B cell (primary cell): ENCODE measurements at regions of chr15 and their contacts with region 1.

Region 1: DNA sequence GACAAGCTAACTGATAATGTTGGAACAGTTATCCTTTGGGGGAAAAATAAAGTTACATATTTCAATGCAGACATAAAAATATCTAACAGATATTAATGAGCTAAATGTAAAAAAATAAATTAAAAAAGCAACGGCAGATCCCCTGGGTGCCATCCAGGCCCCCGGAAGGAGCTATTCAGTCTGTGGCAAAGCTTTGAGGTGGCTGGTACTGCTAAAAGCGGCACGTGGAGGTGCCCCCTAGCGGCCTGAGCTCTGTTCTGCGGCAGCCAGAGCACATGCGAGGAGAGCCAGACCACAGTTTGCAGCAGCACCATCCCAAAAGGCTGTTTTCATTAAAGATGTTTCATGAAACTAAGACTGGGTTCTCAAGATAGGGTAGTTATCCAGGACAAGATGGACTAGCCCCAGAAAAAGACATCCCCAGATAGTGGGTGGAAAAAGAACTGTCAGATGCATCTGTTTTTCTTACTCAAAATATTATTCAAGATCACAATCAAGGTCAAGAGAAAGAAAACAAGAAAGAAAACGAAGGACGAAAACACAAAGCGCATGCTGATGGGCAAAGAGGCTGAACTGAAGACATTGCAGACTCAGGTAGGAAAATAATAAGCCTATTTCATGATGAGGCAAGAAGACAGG is 18.7 kb downstream of the AP3S2 start:
- DNase-seq: peak; percentile 81
- ATAC-seq: peak; percentile 99
- H3K4me3 ChIP-seq: no peak overlapping the region
- H3K4me3 Mint-ChIP-seq: no peak overlapping the region
- H3K27ac ChIP-seq: no peak overlapping the region
- H3K27ac Mint-ChIP-seq: no peak overlapping the region
- H3K4me1 ChIP-seq: peaks cover 0 to 4% of the 10 kb centered on the region in 2 donors
- H3K4me1 Mint-ChIP-seq: peaks cover 5% of the 10 kb centered on the region
- H3K27me3 ChIP-seq: no peaks in the 10 kb centered on the region
- H3K27me3 Mint-ChIP-seq: no peaks in the 10 kb centered on the region
- CTCF ChIP-seq: peak; percentile 97

Region 2: DNA sequence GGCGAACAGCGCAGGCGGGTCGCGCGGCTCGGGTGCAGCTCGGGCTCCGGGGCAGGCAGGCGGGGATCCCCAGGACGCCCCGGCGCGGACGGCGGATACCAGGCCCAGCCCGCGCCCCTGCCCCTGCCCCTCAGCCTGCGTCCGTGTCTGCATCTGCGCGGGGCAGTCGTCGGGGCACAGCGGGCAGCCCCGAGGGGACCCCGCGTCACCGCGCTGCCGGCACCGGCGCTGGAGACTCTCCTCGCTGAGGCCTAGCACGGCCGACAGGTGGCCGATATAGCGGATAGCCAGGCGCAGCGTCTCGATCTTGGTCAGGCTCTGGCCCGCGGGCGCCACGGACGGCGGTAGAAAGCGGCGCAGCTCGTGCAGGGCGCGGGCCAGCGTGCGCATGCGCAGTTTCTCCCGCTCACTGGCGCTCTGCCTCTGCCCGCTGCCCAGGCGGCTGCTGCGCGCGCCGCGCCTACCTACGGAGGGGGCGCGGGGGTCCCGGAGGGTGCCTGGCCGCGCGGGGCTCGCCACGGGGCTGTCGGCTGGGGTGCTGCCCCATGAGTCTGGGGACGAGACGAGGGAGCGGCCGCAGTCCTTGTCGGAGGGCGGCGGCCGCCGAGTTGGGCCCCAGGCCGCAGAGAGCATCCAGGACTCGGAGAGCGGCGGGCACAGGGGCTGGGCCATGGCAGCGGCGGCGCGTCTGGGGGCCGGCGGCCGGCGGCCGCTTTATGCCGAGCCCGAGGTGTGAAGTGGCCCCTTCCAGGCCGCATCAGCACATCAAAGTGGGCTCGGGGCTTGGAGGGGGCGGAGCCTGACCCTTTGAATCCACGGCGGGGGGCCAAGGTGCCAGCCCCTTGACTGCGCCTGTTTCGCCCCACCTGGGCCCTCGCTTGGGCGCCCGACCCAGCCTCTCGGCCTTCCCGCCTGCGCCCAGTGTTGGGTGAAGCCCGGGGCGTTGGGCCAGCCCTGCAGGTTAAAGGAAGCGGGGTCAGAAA is 124.2 kb before region 1 on chr15 and contains the start of gene MESP1:
- CTCF ChIA-PET with region 1: interaction called, 24 read pairs
- POLR2A ChIA-PET with region 1: no interaction called
- intact Hi-C with region 1: no loop called
- DNase-seq: peak; percentile 93
- ATAC-seq: peak; percentile 96
- H3K4me3 ChIP-seq: peak within 1 kb of the TSS in 4 of 5 experiments; percentile 38 to 75 (median 63)
- H3K4me3 Mint-ChIP-seq: peak within 1 kb of the TSS; percentile 84
- H3K27ac ChIP-seq: peak within 1 kb of the TSS in 1 of 2 donors; percentile 39
- H3K27ac Mint-ChIP-seq: peak within 1 kb of the TSS; percentile 53
- H3K4me1 ChIP-seq: peaks cover 11 to 13% of the 10 kb centered on the region in 2 donors
- H3K4me1 Mint-ChIP-seq: peaks cover 6% of the 10 kb centered on the region
- H3K27me3 ChIP-seq: peaks cover 0 to 10% (median 4%) of the 10 kb centered on the region in 4 experiments
- H3K27me3 Mint-ChIP-seq: peaks cover 19% of the 10 kb centered on the region
- CTCF ChIP-seq: peak; percentile 77
- total RNA-seq, gene MESP1: 0.49 and 0.51 TPM in 2 replicates

Region 3: DNA sequence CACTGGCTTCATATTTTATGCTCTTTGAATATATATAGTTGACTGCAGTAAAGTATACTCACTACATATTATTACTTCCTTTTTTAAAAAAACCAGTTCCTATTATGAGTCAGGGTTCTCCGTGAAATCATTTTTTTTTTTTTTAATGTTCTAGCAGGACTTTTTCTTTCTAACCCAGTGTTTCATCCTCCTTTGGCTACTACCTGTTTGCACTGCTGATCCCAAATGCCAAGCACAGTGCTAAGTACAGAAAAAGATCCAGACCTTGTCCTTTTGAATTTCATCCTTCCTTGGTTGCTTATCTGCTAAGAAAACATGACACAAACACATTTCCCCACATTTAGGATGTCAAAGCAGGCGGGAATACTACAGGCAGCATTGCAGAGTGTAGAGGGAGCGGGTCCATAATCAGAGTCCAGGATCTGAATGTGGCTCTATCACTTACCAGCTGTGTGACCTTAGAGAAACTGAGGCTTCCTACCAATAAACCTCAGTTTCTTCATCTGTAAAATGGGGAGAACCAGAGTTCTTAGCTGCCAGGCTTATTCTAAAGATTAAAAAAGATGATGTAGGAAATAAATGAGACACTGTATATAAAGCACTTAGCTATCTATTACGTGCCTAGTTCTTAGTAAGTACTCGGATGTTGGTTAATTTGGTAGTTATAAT is 23.2 kb before region 1 on chr15:
- CTCF ChIA-PET with region 1: interaction called, 10 read pairs
- POLR2A ChIA-PET with region 1: no interaction called
- intact Hi-C with region 1: no loop called
- DNase-seq: peak; percentile 32
- ATAC-seq: peak; percentile 53
- H3K4me3 ChIP-seq: no peak overlapping the region
- H3K4me3 Mint-ChIP-seq: peak overlapping the region; percentile 43
- H3K27ac ChIP-seq: peak overlapping the region in 1 of 2 donors; percentile 36
- H3K27ac Mint-ChIP-seq: peak overlapping the region; percentile 22
- H3K4me1 ChIP-seq: peaks cover 14 to 29% of the 10 kb centered on the region in 2 donors
- H3K4me1 Mint-ChIP-seq: peaks cover 34% of the 10 kb centered on the region
- H3K27me3 ChIP-seq: no peaks in the 10 kb centered on the region
- H3K27me3 Mint-ChIP-seq: no peaks in the 10 kb centered on the region
- CTCF ChIP-seq: no peak

Region 4: DNA sequence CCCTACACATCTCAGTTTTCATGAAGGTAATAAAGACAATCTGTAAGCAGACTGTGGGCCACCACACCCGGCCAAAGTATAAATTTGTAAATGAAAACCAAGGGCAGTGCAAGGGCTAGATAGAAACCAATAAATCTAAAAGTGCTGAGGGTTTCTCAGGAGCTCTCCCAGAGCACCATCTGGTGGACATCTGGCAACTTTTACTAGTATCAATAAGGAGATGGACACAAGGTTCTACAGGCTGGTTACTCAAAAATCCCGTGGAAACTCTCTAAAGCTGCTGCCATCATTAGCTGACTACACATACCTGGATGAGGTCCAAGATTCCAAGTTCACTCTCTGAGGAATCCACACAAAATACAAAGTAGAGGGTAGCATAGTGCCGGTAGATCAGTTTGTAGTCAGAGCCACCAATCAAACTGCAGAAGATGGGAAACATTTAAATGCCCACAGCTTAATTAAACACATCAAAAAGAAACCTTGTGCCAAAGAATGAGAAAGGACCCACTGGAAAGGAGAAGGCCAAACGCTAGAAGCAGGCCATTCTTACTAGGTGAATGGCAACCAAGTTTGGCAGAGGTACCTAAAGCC is 13.3 kb after region 1 on chr15:
- CTCF ChIA-PET with region 1: interaction called, 54 read pairs
- POLR2A ChIA-PET with region 1: no interaction called
- intact Hi-C with region 1: no loop called
- DNase-seq: no peak
- ATAC-seq: no peak
- H3K4me3 ChIP-seq: no peak overlapping the region
- H3K4me3 Mint-ChIP-seq: no peak overlapping the region
- H3K27ac ChIP-seq: no peak overlapping the region
- H3K27ac Mint-ChIP-seq: no peak overlapping the region
- H3K4me1 ChIP-seq: peaks cover 5 to 6% of the 10 kb centered on the region in 2 donors
- H3K4me1 Mint-ChIP-seq: peaks cover 20% of the 10 kb centered on the region
- H3K27me3 ChIP-seq: no peaks in the 10 kb centered on the region
- H3K27me3 Mint-ChIP-seq: no peaks in the 10 kb centered on the region
- CTCF ChIP-seq: no peak

Region 5: DNA sequence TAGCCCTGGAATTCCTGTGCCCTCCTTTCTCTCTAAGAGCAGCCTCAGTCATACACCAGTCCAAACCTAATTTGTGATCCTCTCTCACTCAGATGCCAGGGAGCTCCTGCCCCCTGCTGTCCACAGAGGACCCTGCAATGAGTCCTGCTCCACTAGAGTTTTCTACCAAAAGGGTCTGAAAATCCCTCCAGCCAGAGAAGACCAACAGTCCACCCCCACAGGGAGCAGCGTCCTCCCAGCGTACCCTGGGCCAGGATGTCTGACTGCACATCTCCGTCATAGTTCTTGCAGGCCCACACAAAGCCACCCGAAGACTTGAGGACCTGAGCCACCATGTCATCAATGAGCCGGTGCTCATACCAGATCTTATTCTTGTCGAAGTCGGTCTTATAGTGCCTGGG is 211.8 kb after region 1 on chr15:
- CTCF ChIA-PET with region 1: interaction called, 23 read pairs
- POLR2A ChIA-PET with region 1: no interaction called
- intact Hi-C with region 1: no loop called
- DNase-seq: peak; percentile 63
- ATAC-seq: peak; percentile 73
- H3K4me3 ChIP-seq: no peak overlapping the region
- H3K4me3 Mint-ChIP-seq: no peak overlapping the region
- H3K27ac ChIP-seq: no peak overlapping the region
- H3K27ac Mint-ChIP-seq: peak overlapping the region; percentile 46
- H3K4me1 ChIP-seq: no peaks in the 10 kb centered on the region
- H3K4me1 Mint-ChIP-seq: peaks cover 14% of the 10 kb centered on the region
- H3K27me3 ChIP-seq: no peaks in the 10 kb centered on the region
- H3K27me3 Mint-ChIP-seq: no peaks in the 10 kb centered on the region
- CTCF ChIP-seq: peak; percentile 71

Region 6: GRCh38 chr15:90425726-90426346 is 550.8 kb after region 1 on chr15:
- CTCF ChIA-PET with region 1: no interaction called
- POLR2A ChIA-PET with region 1: no interaction called
- intact Hi-C with region 1: no loop called
- DNase-seq: no peak
- ATAC-seq: no peak
- H3K4me3 ChIP-seq: no peak overlapping the region
- H3K4me3 Mint-ChIP-seq: no peak overlapping the region
- H3K27ac ChIP-seq: no peak overlapping the region
- H3K27ac Mint-ChIP-seq: no peak overlapping the region
- H3K4me1 ChIP-seq: peaks cover 18 to 23% of the 10 kb centered on the region in 2 donors
- H3K4me1 Mint-ChIP-seq: peaks cover 25% of the 10 kb centered on the region
- H3K27me3 ChIP-seq: no peaks in the 10 kb centered on the region
- H3K27me3 Mint-ChIP-seq: no peaks in the 10 kb centered on the region
- CTCF ChIP-seq: no peak